Activated T-helper 2 cell treated with anti-CD3 and anti-CD28 coated beads, Interferon-gamma antibody, Interleukin-2, Interleukin-4, amounts not matched to agents 10 μg/mL and 5 μg/mL and 100 μg/mL, durations not matched to agents 14 hours and 24 hours and 36 hours (primary cell): ENCODE measurements at regions of chr1 and their contacts with region 1.

Region 1: DNA sequence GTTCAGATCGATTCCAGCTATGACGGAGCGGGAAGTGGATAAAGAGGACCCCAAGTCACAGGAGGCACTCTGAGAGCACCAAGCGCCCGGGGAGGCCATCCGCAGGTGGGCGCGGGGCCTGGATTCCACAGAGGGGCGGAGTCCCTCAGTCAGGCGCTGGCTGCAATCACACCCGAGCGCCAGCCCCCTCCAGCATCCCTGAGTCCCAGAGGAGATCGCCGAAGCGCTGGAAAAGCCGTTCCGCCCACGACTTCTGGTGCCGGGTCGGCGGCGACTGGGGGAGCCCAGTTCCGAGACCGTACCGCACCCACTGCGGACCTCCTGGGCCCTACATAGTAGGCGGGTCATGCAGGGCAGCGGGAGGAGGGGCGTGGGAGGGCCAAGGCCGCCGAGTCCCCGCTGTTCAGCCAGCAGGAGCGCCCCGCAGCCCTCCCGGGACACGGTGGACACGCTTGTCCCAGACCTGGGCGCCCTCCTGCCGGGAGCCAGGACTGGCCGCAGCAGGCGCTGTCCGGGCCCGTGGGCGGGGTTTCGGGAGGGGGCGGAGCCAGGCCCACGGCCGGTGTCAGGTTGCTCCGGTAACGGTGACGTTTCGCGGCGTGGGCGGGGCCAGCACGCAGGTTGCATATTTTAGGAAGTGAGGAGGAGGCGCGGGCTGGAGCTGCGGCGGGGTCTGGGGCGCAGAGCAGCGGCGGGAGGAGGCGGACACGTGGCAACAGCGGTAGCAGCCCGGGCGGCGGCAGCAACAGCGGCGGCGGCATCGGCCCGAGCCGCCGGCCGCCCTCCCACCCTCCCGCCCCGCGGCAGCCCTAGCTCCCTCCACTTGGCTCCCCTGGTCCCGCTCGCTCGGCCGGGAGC is at the start of gene ATP1A1:
- DNase-seq: peak; percentile 95
- H3K4me3 Mint-ChIP-seq: peak within 1 kb of the TSS; percentile 95
- H3K27ac Mint-ChIP-seq: peak within 1 kb of the TSS; percentile 87
- H3K4me1 Mint-ChIP-seq: peaks cover 34% of the 10 kb centered on the region
- H3K27me3 Mint-ChIP-seq: peaks cover 28% of the 10 kb centered on the region
- total RNA-seq, gene ATP1A1: 196 and 200 TPM in 2 replicates

Region 2: GRCh38 chr1:115239148-115239820 is 1133.5 kb before region 1 on chr1:
- intact Hi-C with region 1: no loop called
- DNase-seq: no peak
- H3K4me3 Mint-ChIP-seq: no peak overlapping the region
- H3K27ac Mint-ChIP-seq: no peak overlapping the region
- H3K4me1 Mint-ChIP-seq: no peaks in the 10 kb centered on the region
- H3K27me3 Mint-ChIP-seq: no peaks in the 10 kb centered on the region

Region 3: GRCh38 chr1:116151739-116152576 is 220.9 kb before region 1 on chr1:
- intact Hi-C with region 1: loop called (anchors 5 kb)
- DNase-seq: peak; percentile 68
- H3K4me3 Mint-ChIP-seq: peak overlapping the region; percentile 20
- H3K27ac Mint-ChIP-seq: peak overlapping the region; percentile 50
- H3K4me1 Mint-ChIP-seq: peaks cover 11% of the 10 kb centered on the region
- H3K27me3 Mint-ChIP-seq: peaks cover 32% of the 10 kb centered on the region

Region 4: GRCh38 chr1:116390195-116390594 is 17.4 kb after region 1 on chr1:
- intact Hi-C with region 1: no loop called
- DNase-seq: no peak
- H3K4me3 Mint-ChIP-seq: no peak overlapping the region
- H3K27ac Mint-ChIP-seq: no peak overlapping the region
- H3K4me1 Mint-ChIP-seq: peaks cover 29% of the 10 kb centered on the region
- H3K27me3 Mint-ChIP-seq: no peaks in the 10 kb centered on the region

Region 5: GRCh38 chr1:116404699-116405098 is 31.9 kb after region 1 on chr1:
- intact Hi-C with region 1: no loop called
- DNase-seq: no peak
- H3K4me3 Mint-ChIP-seq: no peak overlapping the region
- H3K27ac Mint-ChIP-seq: no peak overlapping the region
- H3K4me1 Mint-ChIP-seq: peaks cover 11% of the 10 kb centered on the region
- H3K27me3 Mint-ChIP-seq: no peaks in the 10 kb centered on the region

Region 6: GRCh38 chr1:117664314-117664713 is 1291.5 kb after region 1 on chr1:
- intact Hi-C with region 1: loop called (anchors 10 kb)
- DNase-seq: peak; percentile 67
- H3K4me3 Mint-ChIP-seq: no peak overlapping the region
- H3K27ac Mint-ChIP-seq: peak overlapping the region; percentile 83
- H3K4me1 Mint-ChIP-seq: peaks cover 67% of the 10 kb centered on the region
- H3K27me3 Mint-ChIP-seq: no peaks in the 10 kb centered on the region

Region 7: DNA sequence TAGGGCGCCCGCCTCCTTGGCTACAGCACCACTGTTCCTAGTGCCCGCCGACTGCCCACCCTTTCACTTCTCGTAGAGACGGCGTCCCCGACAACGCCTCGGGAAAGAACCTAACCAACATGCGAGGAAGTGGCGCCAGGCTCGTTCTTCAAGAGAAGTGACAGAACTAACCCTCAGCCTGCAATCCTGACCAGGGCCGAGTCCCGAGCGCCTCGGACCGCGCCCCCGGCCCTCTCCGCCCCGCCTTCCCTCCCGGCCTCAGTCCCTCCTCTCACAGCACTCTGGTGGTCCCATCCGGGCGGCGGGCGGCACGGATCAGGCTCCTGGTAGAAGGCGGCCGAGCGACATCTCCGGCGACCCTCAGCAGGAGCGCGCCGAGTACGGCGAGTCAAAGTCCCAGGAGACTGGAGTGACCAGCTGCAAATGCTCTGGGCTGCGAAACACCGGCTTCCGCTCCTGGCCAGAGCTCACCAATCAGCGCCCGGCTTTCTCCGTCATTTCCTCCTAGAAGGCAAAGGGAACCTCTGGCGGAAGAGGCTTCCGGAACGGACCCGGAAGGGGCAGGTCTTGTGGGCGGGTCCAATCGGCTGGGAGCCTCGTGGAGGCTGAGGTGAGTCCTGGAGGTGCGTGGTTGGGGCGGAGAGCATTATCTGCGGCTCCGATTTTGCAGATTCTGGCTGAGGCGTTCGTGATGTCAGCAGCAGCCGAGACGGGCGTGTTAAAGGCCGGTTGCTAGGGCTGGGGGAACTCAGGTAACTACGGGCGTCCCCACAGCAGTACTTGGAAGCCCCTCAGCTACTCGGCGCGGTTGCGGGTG is 1556.6 kb after region 1 on chr1 and contains the starts of genes GDAP2 and WDR3:
- intact Hi-C with region 1: loop called (anchors 5 kb)
- DNase-seq: peak; percentile 95
- H3K4me3 Mint-ChIP-seq: peak within 1 kb of the TSS; percentile 93
- H3K27ac Mint-ChIP-seq: peak within 1 kb of the TSS; percentile 80
- H3K4me1 Mint-ChIP-seq: peaks cover 39% of the 10 kb centered on the region
- H3K27me3 Mint-ChIP-seq: peaks cover 1% of the 10 kb centered on the region
- total RNA-seq, gene GDAP2: 19.7 and 25.3 TPM in 2 replicates
- total RNA-seq, gene WDR3: 54.2 and 55.5 TPM in 2 replicates